ENCODE measurements at regions of chr13 and their contacts with region 1.

Region 1: DNA sequence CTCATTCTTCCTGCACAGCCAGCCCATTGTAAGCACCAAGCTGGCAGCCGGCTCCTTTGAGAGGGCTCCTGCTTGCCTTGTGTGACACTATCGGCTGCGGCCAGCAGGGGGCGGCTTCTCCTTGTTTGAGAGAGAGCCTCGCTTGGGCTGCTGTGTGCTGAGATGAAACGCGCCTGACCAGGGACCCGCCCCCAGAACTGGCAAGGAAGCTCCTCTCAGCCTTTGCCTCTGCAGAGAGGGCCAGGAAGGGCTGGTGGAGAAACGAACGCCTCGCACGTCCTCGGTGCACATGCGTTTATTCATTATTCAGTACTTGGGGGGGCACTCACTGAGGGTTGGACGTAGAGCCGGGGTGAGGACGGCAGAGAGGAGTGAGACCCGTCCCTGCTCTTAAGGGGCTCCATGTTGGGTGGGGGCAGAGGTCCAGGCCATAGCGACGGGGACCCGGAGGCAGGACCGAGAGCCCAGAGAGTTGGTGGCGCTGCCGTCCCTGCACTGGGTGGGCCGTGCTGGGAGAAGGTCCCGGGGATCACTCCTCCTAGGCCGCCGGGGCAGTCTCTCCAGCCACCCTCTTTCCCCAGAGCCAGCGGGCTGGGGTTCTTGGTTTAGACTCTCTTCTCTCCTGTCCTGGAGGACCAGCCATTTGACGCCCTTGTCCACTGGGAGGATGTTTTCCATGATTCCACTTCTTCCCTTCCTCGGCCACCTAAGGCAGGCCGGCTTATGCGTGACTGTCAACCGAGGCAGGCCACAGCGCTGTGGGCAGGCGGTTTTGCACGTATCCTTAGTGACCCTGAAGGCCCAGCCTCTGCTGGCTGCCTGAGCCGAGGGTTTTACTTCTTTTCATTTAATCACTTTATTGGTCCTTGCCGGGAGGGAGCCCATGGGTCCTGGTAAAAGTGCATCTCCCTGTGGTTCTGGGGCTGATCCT is 174.5 kb downstream of the KATNAL1 start:
- DNase-seq: peak; percentile 99
- ATAC-seq: peak; percentile 93

Region 2: GRCh38 chr13:30581582-30581981 is 448.7 kb after region 1 on chr13:
- intact Hi-C with region 1: loop called (anchors 10 kb)
- DNase-seq: no peak
- ATAC-seq: no peak

Region 3: GRCh38 chr13:30792285-30793000 is 659.6 kb after region 1 on chr13:
- intact Hi-C with region 1: loop called (anchors 10 kb)
- DNase-seq: peak; percentile 88
- ATAC-seq: peak; percentile 93